ENCODE measurements at regions of chr2 and their contacts with region 1.

Region 1: GRCh38 chr2:105617756-105618659 is 126.7 kb upstream of the NCK2 start:
- DNase-seq: peak; percentile 4 to 72
- H3K4me3 ChIP-seq: no peak overlapping the region
- H3K27ac ChIP-seq: no peak overlapping the region
- H3K4me1 ChIP-seq: no peaks in the 10 kb centered on the region
- H3K27me3 ChIP-seq: peaks cover 32% of the 10 kb centered on the region
- CTCF ChIP-seq: no peak

Region 2: DNA sequence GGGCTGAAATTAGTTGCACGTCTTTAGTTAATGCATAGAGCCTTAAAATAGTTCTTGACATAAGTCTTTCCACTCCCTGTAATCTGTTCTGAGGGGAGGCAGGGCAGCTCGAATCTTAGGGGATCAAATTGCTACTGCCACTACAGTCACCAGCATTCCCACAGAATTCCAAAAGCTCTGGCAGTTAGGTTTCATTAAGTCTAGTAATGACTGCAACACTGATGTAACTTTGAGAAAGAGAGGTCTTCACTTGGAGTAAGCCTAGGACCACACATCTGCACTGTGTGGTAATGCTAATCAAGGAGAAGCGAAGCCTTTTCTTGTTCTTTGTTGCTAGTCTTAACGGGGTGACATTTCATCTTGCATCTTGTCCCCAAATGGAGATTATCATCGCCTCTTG is 107.4 kb after region 1 on chr2:
- CTCF ChIA-PET with region 1: no interaction called
- POLR2A ChIA-PET with region 1: interaction called, 29 read pairs
- intact Hi-C with region 1: no loop called
- DNase-seq: no peak
- H3K4me3 ChIP-seq: no peak overlapping the region
- H3K27ac ChIP-seq: no peak overlapping the region
- H3K4me1 ChIP-seq: no peaks in the 10 kb centered on the region
- H3K27me3 ChIP-seq: peaks cover 25% of the 10 kb centered on the region
- CTCF ChIP-seq: no peak